ENCODE measurements at regions of chr22 and their contacts with region 1.

Region 1: DNA sequence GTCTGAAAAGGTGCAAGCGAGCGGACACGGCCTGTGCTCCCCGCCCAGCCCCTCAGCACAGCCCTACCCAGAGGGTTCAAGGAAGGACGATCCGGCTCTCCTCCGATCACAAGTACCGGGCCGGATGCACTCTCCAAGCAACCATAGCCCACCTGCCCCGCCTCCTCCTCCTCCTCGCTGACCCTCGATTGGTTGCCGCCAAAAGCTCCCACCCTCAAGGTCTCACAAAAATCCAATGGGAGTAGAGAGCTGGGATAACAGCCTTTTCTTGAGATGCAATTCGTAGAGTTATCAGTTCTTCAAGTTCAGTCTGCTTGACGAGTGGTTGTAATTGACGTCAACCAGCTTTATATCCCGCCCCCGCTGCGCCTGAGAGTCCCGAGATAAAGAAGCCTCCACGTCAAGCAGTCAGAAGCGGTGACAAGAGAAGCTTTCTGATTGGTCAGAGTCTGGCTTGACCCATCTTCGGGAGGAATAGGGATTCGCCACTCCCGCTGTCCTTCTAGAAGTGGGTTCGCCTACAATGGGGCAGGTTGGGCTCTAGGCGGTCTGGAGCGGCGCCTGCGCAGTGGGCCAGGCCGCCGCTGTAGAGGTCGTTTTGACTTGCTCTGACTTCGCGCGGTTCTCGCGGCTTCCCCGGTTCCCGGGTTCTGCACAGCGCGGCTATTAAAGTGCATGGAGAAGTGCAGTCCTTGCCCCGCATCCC is at the start of gene IFT27:
- DNase-seq: peak; percentile 88 to 99 (median 97)
- ATAC-seq: peak; percentile 87 to 90 (median 89)
- H3K4me3 ChIP-seq: peak within 1 kb of the TSS; percentile 67
- H3K4me3 Mint-ChIP-seq: peak within 1 kb of the TSS; percentile 87 to 92 (median 90)
- H3K27ac ChIP-seq: peak within 1 kb of the TSS; percentile 79
- H3K27ac Mint-ChIP-seq: peak within 1 kb of the TSS; percentile 95 to 99
- H3K4me1 ChIP-seq: peaks cover 14 to 16% of the 10 kb centered on the region in 2 experiments
- H3K4me1 Mint-ChIP-seq: peaks cover 26 to 32% (median 26%) of the 10 kb centered on the region in 3 donors
- H3K27me3 ChIP-seq: no peaks in the 10 kb centered on the region
- H3K27me3 Mint-ChIP-seq: no peaks in the 10 kb centered on the region
- total RNA-seq, gene IFT27: 19.1 to 34.5 (median 32.0) TPM

Region 2: GRCh38 chr22:36856121-36856791 is 80.1 kb after region 1 on chr22:
- CTCF ChIA-PET with region 1: interaction called in 1 of 2 experiments, 13 read pairs
- POLR2A ChIA-PET with region 1: no interaction called
- DNase-seq: peak; percentile 65 to 97 (median 91)
- ATAC-seq: peak; percentile 67 to 75 (median 69)
- H3K4me3 ChIP-seq: no peak overlapping the region
- H3K4me3 Mint-ChIP-seq: peak overlapping the region; percentile 4 to 56 (median 7)
- H3K27ac ChIP-seq: no peak overlapping the region
- H3K27ac Mint-ChIP-seq: peak overlapping the region; percentile 37 to 79
- H3K4me1 ChIP-seq: peaks cover 2 to 31% of the 10 kb centered on the region in 2 experiments
- H3K4me1 Mint-ChIP-seq: peaks cover 27 to 30% (median 30%) of the 10 kb centered on the region in 3 donors
- H3K27me3 ChIP-seq: peaks cover 0 to 2% of the 10 kb centered on the region in 2 experiments
- H3K27me3 Mint-ChIP-seq: peaks cover 0 to 4% of the 10 kb centered on the region in 2 donors

Region 3: GRCh38 chr22:36977947-36978660 is 202.0 kb after region 1 on chr22:
- CTCF ChIA-PET with region 1: interaction called in 1 of 2 experiments, 24 read pairs
- POLR2A ChIA-PET with region 1: no interaction called
- DNase-seq: peak; percentile 77 to 95 (median 87)
- ATAC-seq: peak; percentile 83 to 90 (median 87)
- H3K4me3 ChIP-seq: peak overlapping the region; percentile 59 to 62
- H3K4me3 Mint-ChIP-seq: peak overlapping the region; percentile 85 to 94 (median 91)
- H3K27ac ChIP-seq: peak overlapping the region; percentile 52
- H3K27ac Mint-ChIP-seq: peak overlapping the region; percentile 92 to 93
- H3K4me1 ChIP-seq: peaks cover 0 to 13% of the 10 kb centered on the region in 2 experiments
- H3K4me1 Mint-ChIP-seq: peaks cover 8 to 14% (median 12%) of the 10 kb centered on the region in 3 donors
- H3K27me3 ChIP-seq: peaks cover 0 to 15% of the 10 kb centered on the region in 2 experiments
- H3K27me3 Mint-ChIP-seq: peaks cover 4 to 9% of the 10 kb centered on the region in 2 donors